ENCODE measurements at regions of chr10 and their contacts with region 1.

Region 1: DNA sequence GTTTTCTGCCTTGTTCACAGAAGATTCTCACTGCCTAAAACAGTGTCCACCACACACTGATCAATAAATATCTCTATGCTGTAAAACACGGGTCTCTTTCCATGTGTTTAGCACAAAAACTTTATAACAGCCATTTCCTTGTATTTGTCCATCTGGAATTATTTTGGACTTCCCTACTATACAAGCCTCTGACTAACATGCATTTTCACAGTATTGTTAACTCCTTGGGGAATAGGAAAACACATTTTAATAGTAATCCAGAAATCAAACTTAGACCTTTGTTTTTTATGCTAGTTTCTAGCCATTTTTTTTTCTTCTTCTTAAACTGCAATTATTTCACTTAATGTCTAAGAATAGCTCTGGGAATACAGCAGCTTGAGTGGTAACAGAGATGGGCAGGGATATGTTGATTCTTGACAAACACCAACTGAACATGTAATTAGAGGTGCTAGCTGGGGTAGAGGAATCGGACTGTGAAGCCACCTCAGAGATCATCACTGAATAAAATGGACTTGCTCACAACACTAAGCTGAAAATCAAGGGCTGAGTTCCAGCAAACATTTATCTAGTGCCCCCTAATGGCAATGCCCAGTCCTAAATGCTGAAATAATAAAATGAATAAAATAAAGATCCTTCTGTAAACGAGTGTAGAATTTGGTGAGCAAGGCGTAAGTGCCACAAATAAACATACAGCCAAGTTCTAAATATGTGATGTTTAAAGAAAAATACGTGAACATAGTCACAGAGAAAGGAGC is 593.1 kb downstream of the SORCS1 start:
- DNase-seq: no peak
- H3K4me3 ChIP-seq: no peak overlapping the region
- H3K27ac ChIP-seq: no peak overlapping the region
- H3K4me1 ChIP-seq: peaks cover 0 to 2% (median under 1%) of the 10 kb centered on the region in 4 experiments; a peak in 1 of 7 replicates
- H3K27me3 ChIP-seq: no peaks in the 10 kb centered on the region
- CTCF ChIP-seq: peak in 2 of 3 experiments; percentile 55 to 57; a peak in 3 of 4 replicates
- EP300 ChIP-seq: no peak
- POLR2A ChIP-seq: no peak
- RAD21 ChIP-seq: peak; percentile 62 to 67

Region 2: DNA sequence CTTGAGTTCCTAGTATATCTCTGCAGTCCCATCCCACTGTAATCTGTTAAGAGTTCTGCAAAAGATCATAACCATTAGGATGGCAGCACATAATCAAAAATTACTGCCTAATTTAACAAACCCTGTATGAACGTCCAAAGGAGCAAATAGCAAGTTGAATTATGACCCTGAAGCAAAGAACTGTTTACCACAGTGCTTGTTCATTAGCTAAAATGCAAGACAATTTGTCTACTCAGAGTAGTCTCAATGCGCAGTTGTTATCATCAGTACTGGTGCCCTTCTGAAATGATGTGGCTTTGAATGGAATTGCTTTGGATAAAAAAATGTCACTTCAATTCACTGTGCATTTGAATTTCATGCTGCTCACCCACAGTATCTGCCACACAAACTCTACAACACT is 223.8 kb before region 1 on chr10:
- CTCF ChIA-PET with region 1: no interaction called
- POLR2A ChIA-PET with region 1: no interaction called
- DNase-seq: no peak
- H3K4me3 ChIP-seq: no peak overlapping the region
- H3K27ac ChIP-seq: no peak overlapping the region
- H3K4me1 ChIP-seq: no peaks in the 10 kb centered on the region
- H3K27me3 ChIP-seq: no peaks in the 10 kb centered on the region
- CTCF ChIP-seq: no peak
- EP300 ChIP-seq: no peak
- POLR2A ChIP-seq: no peak
- RAD21 ChIP-seq: no peak

Region 3: DNA sequence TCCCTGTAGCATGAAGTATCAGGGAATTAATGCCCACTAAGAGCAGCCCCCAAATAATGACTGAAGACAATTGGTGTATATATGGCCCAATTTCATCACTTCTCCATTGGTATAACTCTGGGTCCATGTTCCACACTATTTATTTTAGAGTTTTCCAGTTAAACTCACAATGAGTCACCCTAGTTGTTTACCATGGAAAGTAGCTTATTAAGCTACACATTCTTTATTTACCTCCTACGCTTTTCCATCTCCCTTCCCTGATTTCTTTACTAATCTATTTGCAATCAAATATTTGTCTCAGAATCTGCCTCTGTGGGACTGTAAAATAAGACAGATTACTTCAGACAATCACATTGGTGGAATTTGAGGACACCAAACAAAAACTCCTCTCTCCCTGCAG is 62.4 kb before region 1 on chr10:
- CTCF ChIA-PET with region 1: interaction called, 11 read pairs
- POLR2A ChIA-PET with region 1: no interaction called
- DNase-seq: no peak
- H3K4me3 ChIP-seq: no peak overlapping the region
- H3K27ac ChIP-seq: no peak overlapping the region
- H3K4me1 ChIP-seq: no peaks in the 10 kb centered on the region
- H3K27me3 ChIP-seq: no peaks in the 10 kb centered on the region
- CTCF ChIP-seq: no peak
- EP300 ChIP-seq: no peak
- POLR2A ChIP-seq: no peak
- RAD21 ChIP-seq: no peak

Region 4: GRCh38 chr10:106560925-106561640 is 10.3 kb before region 1 on chr10:
- CTCF ChIA-PET with region 1: interaction called, 38 read pairs
- POLR2A ChIA-PET with region 1: interaction called, 3 read pairs
- DNase-seq: no peak
- H3K4me3 ChIP-seq: no peak overlapping the region
- H3K27ac ChIP-seq: no peak overlapping the region
- H3K4me1 ChIP-seq: peaks cover 0 to 2% (median 0%) of the 10 kb centered on the region in 4 experiments; a peak in 1 of 7 replicates
- H3K27me3 ChIP-seq: no peaks in the 10 kb centered on the region
- CTCF ChIP-seq: no peak
- EP300 ChIP-seq: no peak
- POLR2A ChIP-seq: no peak
- RAD21 ChIP-seq: no peak